ENCODE measurements at regions of chr14 and their contacts with region 1.

Region 1: GRCh38 chr14:20970983-20971704 is 15.9 kb downstream of the RNASE2 start:
- DNase-seq: peak; percentile 82
- H3K4me3 Mint-ChIP-seq: peak overlapping the region; percentile 83
- H3K27ac Mint-ChIP-seq: no peak overlapping the region
- H3K4me1 Mint-ChIP-seq: peaks cover 6% of the 10 kb centered on the region
- H3K27me3 Mint-ChIP-seq: peaks cover 17% of the 10 kb centered on the region

Region 2: DNA sequence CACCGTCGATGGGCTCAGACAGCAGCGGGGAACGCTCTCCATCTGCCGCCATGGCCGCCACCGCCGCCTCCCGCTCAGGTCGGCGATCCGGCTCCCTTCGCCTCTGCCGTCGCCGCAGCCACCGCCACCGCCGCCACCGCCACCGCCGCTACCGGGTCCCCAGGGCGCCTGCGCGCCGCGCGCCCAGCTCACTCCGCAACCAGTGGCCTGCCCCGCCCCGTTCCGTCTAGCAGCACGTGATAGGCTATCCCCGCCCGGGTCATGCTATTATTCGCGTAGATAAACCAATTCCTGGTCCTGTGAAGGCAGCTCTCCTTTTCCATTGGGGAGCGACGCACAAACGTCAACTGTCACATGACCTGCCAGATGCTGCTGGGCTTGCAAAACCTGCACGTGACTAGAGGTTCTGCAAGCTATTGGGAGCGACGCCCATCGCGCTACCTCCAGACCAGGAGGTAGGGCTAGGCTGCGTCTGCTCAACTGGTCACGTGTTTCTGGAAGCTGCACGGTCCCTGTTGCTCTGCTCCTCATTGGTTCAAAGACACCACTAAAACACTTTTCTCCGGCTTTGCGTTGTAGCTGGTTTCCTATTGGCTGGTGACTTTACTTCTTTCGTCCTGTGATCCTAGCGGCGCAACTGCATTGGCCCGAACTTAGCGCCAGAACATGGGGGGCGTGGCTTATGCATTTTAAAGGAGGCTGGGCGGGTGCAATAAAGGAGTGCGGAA is 509.7 kb before region 1 on chr14 and contains the start of gene PIP4P1:
- CTCF ChIA-PET with region 1: no interaction called
- intact Hi-C with region 1: loop called (anchors 10 kb)
- DNase-seq: peak; percentile 99
- H3K4me3 Mint-ChIP-seq: peak within 1 kb of the TSS; percentile 92
- H3K27ac Mint-ChIP-seq: peak within 1 kb of the TSS; percentile 96
- H3K4me1 Mint-ChIP-seq: peaks cover 29% of the 10 kb centered on the region
- H3K27me3 Mint-ChIP-seq: no peaks in the 10 kb centered on the region
- total RNA-seq, gene PIP4P1: 31.6 to 32.3 TPM

Region 3: GRCh38 chr14:20697273-20698017 is 273.7 kb before region 1 on chr14:
- CTCF ChIA-PET with region 1: interaction called, 25 read pairs
- intact Hi-C with region 1: loop called (anchors 1 kb)
- DNase-seq: peak; percentile 83
- H3K4me3 Mint-ChIP-seq: no peak overlapping the region
- H3K27ac Mint-ChIP-seq: no peak overlapping the region
- H3K4me1 Mint-ChIP-seq: no peaks in the 10 kb centered on the region
- H3K27me3 Mint-ChIP-seq: no peaks in the 10 kb centered on the region

Region 4: DNA sequence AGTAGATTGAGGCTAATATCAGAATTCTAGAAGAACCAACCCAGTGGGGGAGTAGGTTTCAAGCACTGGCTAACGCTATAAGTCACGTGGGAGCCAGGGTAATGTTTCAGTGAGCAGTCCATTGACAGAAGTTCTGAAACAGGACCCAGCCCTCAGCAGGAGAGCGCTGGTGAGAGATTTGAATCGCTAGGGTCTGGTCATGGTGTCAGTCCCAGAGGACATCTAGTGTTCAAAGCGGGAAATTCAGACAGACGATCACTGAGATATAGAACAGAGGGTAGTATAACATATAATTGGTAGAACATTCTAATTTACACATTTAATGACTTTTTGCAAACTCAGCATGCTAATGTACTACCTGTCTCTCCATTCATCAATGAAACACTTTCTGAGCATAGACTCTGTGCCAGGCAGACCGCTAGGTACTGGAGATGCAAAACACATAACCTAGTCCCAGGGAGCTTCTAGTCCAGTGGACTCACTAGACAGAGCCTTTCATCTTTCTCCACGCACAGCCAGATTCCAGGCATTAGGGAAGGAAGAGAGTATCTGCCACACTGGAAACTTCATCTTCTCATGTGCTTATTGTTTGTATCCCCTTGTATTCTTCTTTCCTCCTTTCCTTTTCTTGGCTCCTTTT is 115.4 kb before region 1 on chr14:
- CTCF ChIA-PET with region 1: interaction called, 89 read pairs
- intact Hi-C with region 1: loop called (anchors 1 kb)
- DNase-seq: peak; percentile 62
- H3K4me3 Mint-ChIP-seq: no peak overlapping the region
- H3K27ac Mint-ChIP-seq: no peak overlapping the region
- H3K4me1 Mint-ChIP-seq: no peaks in the 10 kb centered on the region
- H3K27me3 Mint-ChIP-seq: no peaks in the 10 kb centered on the region

Region 5: GRCh38 chr14:20956376-20956976 is 14.7 kb before region 1 on chr14:
- CTCF ChIA-PET with region 1: interaction called, 80 read pairs
- intact Hi-C with region 1: loop called (anchors 1 kb)
- DNase-seq: no peak
- H3K4me3 Mint-ChIP-seq: no peak overlapping the region
- H3K27ac Mint-ChIP-seq: no peak overlapping the region
- H3K4me1 Mint-ChIP-seq: peaks cover 15% of the 10 kb centered on the region
- H3K27me3 Mint-ChIP-seq: no peaks in the 10 kb centered on the region

Region 6: DNA sequence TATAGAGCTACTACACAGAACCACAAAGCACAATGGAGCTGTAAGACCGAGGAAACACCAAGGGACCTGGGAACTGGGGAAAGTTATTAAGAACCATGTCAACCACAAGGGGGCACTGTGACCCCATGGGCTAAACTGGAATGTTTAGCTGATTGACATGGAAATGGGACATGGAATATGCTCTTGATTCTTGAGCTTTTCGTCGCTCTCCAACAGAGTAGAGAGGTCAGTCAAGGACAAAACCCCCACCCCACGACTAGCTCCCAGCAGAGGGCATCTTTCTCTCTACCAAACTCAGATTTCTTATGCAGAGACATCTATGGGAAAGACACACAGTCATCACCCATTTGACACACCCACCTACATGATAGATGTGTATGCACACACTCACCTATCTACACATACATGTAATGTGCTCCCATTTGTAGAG is 43.6 kb after region 1 on chr14:
- CTCF ChIA-PET with region 1: interaction called, 24 read pairs
- intact Hi-C with region 1: no loop called
- DNase-seq: peak; percentile 91
- H3K4me3 Mint-ChIP-seq: no peak overlapping the region
- H3K27ac Mint-ChIP-seq: no peak overlapping the region
- H3K4me1 Mint-ChIP-seq: no peaks in the 10 kb centered on the region
- H3K27me3 Mint-ChIP-seq: peaks cover 5% of the 10 kb centered on the region

Region 7: GRCh38 chr14:21103710-21104447 is 132.7 kb after region 1 on chr14:
- CTCF ChIA-PET with region 1: interaction called, 19 read pairs
- intact Hi-C with region 1: loop called (anchors 1 kb)
- DNase-seq: peak; percentile 98
- H3K4me3 Mint-ChIP-seq: peak overlapping the region; percentile 87
- H3K27ac Mint-ChIP-seq: peak overlapping the region; percentile 84
- H3K4me1 Mint-ChIP-seq: peaks cover 29% of the 10 kb centered on the region
- H3K27me3 Mint-ChIP-seq: no peaks in the 10 kb centered on the region

Measured in activated naive CD4-positive, alpha-beta T cell treated with anti-CD3 and anti-CD28 coated beads for 36 hours (primary cell).